Activated CD4-positive, alpha-beta memory T cell treated with anti-CD3 and anti-CD28 coated beads, Interleukin-2, amount 10 ng/mL, durations not matched to agents 7 days and 5 days (primary cell): ENCODE measurements at regions of chr2 and their contacts with region 1.

Region 1: GRCh38 chr2:113756355-113757137 is at the start of gene SLC35F5:
- DNase-seq: peak; percentile 94
- H3K4me3 Mint-ChIP-seq: peak within 1 kb of the TSS; percentile 91
- H3K27ac Mint-ChIP-seq: peak within 1 kb of the TSS; percentile 98
- H3K4me1 Mint-ChIP-seq: peaks cover 27% of the 10 kb centered on the region
- H3K27me3 Mint-ChIP-seq: peaks cover 2% of the 10 kb centered on the region
- total RNA-seq, gene SLC35F5: 18.4 to 21.6 TPM

Region 2: DNA sequence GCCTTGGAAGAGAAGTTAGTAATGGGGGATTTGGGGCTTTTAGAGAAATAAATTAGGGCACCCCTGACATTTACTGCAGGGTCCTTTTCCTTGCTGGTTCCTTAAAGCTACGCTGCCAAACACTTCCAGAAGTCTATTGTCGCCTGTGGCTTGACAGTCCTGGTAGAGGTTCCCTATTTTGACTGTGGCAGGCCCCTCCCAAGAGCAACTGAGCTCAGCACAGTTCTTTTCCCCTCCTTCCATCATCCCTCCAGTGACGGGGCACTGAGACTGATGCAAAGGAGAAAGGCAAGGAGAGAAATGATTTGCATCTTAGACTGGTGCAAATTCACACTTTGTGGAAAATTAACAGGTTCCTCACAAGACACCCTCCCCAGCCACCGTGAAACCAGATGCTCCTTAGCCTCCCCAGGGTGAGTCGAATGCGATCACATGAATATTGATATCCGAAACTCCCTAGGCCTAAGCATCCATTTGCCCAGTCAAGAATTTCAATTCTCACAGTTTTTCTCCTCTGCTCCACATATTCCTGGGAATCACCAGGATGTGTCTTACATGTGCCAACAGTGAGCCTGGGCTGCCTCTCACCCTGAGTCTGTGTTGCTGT is 84.1 kb before region 1 on chr2:
- CTCF ChIA-PET with region 1: no interaction called
- POLR2A ChIA-PET with region 1: no interaction called
- DNase-seq: no peak
- H3K4me3 Mint-ChIP-seq: no peak overlapping the region
- H3K27ac Mint-ChIP-seq: no peak overlapping the region
- H3K4me1 Mint-ChIP-seq: no peaks in the 10 kb centered on the region
- H3K27me3 Mint-ChIP-seq: peaks cover 2% of the 10 kb centered on the region

Region 3: GRCh38 chr2:113741091-113741490 is 15.5 kb before region 1 on chr2:
- CTCF ChIA-PET with region 1: interaction called, 4 read pairs
- POLR2A ChIA-PET with region 1: interaction called, 20 read pairs
- DNase-seq: no peak
- H3K4me3 Mint-ChIP-seq: no peak overlapping the region
- H3K27ac Mint-ChIP-seq: no peak overlapping the region
- H3K4me1 Mint-ChIP-seq: no peaks in the 10 kb centered on the region
- H3K27me3 Mint-ChIP-seq: no peaks in the 10 kb centered on the region

Region 4: DNA sequence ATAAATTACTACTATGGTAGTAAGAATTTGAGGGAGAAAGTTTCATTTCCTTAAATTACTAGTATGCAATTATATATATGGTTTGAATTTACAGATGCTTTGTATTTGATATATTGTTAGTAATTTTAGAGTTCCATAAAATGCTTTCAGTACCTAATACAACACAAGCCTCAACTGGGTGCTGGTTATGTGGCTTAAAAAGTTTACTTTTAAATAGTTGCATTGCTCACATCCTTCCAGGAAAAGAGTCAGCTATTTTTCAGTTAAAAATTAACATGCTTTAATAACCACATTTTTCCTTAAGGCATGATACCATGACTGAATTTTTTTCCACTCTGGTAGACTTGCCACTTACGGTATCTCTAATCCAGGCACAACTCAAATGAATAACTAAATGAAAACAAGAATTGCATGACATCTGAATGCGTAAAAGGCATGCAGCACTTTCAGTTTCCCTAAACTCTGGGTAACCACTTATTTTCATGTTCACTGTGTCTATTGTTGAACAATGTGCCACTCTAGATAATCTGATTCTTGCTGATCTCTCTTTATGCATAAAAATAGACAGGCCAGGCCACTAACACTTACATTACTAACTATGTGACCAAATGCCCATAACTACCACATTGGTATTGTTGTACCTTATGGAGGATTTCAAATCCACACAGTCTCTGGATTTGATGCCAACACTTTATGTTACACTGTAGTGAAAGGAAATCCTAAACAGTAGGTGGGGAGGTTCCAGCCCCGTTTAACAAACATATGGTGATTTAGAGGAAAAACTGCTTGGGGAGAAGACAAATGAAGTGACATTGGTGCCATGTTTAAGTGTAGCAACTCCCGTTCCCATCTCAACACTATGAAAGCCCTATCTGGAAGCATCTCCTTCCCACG is 35.4 kb after region 1 on chr2:
- CTCF ChIA-PET with region 1: interaction called, 4 read pairs
- POLR2A ChIA-PET with region 1: interaction called, 11 read pairs
- DNase-seq: no peak
- H3K4me3 Mint-ChIP-seq: peak overlapping the region; percentile 39
- H3K27ac Mint-ChIP-seq: peak overlapping the region; percentile 62
- H3K4me1 Mint-ChIP-seq: peaks cover 17% of the 10 kb centered on the region
- H3K27me3 Mint-ChIP-seq: no peaks in the 10 kb centered on the region

Region 5: DNA sequence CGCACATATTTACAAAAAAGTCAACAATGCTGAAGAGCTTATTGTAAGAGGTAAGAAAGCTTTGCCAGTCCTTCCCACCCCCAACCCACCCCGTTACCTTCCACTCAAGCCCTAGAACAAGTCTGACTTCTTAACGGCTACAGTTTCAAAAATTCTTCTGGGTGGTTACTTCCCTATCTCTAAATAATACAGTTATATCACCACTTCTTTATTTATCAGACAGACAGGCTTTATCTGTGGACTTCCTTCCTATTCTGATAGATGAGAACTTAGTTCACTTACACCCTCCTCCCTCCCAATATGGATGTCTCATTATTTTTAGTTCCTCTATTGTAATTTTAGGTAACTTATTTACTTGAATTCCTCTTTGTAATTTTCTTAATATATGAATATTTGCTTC is 106.6 kb after region 1 on chr2:
- CTCF ChIA-PET with region 1: no interaction called
- POLR2A ChIA-PET with region 1: interaction called, 11 read pairs
- DNase-seq: no peak
- H3K4me3 Mint-ChIP-seq: no peak overlapping the region
- H3K27ac Mint-ChIP-seq: no peak overlapping the region
- H3K4me1 Mint-ChIP-seq: no peaks in the 10 kb centered on the region
- H3K27me3 Mint-ChIP-seq: peaks cover 7% of the 10 kb centered on the region

Region 6: GRCh38 chr2:113876503-113877387 is 120.2 kb after region 1 on chr2:
- CTCF ChIA-PET with region 1: interaction called, 10 read pairs
- POLR2A ChIA-PET with region 1: interaction called, 32 read pairs
- DNase-seq: peak; percentile 78
- H3K4me3 Mint-ChIP-seq: peak overlapping the region; percentile 2
- H3K27ac Mint-ChIP-seq: peak overlapping the region; percentile 87
- H3K4me1 Mint-ChIP-seq: peaks cover 53% of the 10 kb centered on the region
- H3K27me3 Mint-ChIP-seq: no peaks in the 10 kb centered on the region

Region 7: DNA sequence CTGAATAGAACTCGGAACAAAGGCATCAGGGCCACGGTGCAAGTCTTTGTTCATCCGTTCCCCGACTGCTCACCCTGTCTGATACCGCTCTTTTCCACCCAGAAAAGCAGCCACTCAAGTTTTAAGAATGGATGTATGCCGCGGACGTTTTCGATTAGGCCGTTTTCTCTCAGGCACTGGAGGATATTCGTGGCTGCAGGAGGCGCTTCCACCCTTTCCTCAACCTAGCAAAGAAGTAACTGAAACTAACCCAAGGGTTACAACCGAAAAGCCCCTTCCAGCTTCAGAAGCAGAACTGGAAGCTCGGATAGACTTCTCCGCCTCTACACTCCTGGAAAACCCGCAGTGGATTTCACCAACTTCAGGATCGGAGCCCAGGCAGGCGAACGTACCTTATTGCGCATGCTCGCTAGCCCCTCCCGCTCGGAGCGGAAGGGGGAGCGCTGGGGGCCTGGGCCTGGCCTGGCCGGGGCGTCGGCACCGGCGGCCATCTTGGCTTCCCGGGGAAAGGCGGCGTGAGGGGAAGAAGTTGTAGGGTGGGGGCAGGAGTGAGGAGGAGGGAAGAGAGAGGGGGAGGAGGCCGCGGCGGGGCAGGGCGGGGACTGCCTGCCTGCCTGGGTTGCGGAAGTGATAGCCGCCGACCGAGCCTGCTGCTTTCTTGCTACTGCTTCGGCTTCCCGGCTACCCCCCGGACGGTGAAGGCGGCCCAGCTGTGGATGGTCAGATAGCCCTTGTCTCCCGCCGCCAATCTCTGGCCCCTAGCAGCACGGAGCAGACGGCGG is 133.1 kb after region 1 on chr2 and contains the start of gene ACTR3:
- CTCF ChIA-PET with region 1: interaction called, 3 read pairs
- POLR2A ChIA-PET with region 1: interaction called, 82 read pairs
- DNase-seq: peak; percentile 99
- H3K4me3 Mint-ChIP-seq: peak within 1 kb of the TSS; percentile 99
- H3K27ac Mint-ChIP-seq: peak within 1 kb of the TSS; percentile 99
- H3K4me1 Mint-ChIP-seq: peaks cover 70% of the 10 kb centered on the region
- H3K27me3 Mint-ChIP-seq: no peaks in the 10 kb centered on the region
- total RNA-seq, gene ACTR3: 580 to 592 TPM

Region 8: GRCh38 chr2:113910110-113910717 is 153.7 kb after region 1 on chr2:
- CTCF ChIA-PET with region 1: no interaction called
- POLR2A ChIA-PET with region 1: interaction called, 11 read pairs
- DNase-seq: no peak
- H3K4me3 Mint-ChIP-seq: no peak overlapping the region
- H3K27ac Mint-ChIP-seq: peak overlapping the region; percentile 47
- H3K4me1 Mint-ChIP-seq: peaks cover 72% of the 10 kb centered on the region
- H3K27me3 Mint-ChIP-seq: no peaks in the 10 kb centered on the region